Gastrocnemius medialis (tissue), 4 donors: ENCODE measurements at regions of chr1 and their contacts with region 1.

Region 1: GRCh38 chr1:84506002-84506728 is at the starts of genes GNG5 and SPATA1:
- DNase-seq: peak; percentile 97 to 98
- ATAC-seq: peak; percentile 86 to 91
- H3K4me3 ChIP-seq: peak within 1 kb of the TSS; percentile 77 to 92 (median 81)
- H3K27ac ChIP-seq: peak within 1 kb of the TSS; percentile 96 to 97 (median 96)
- H3K4me1 ChIP-seq: peaks cover 34% of the 10 kb centered on the region in 2 donors
- H3K27me3 ChIP-seq: no peaks in the 10 kb centered on the region
- CTCF ChIP-seq: no peak
- POLR2A ChIP-seq: peak; percentile 88 to 93
- total RNA-seq, gene GNG5: 122 to 168 (median 128) TPM
- total RNA-seq, gene SPATA1: 0.35 TPM in 1 of 4 donors, not detected in the others

Region 2: DNA sequence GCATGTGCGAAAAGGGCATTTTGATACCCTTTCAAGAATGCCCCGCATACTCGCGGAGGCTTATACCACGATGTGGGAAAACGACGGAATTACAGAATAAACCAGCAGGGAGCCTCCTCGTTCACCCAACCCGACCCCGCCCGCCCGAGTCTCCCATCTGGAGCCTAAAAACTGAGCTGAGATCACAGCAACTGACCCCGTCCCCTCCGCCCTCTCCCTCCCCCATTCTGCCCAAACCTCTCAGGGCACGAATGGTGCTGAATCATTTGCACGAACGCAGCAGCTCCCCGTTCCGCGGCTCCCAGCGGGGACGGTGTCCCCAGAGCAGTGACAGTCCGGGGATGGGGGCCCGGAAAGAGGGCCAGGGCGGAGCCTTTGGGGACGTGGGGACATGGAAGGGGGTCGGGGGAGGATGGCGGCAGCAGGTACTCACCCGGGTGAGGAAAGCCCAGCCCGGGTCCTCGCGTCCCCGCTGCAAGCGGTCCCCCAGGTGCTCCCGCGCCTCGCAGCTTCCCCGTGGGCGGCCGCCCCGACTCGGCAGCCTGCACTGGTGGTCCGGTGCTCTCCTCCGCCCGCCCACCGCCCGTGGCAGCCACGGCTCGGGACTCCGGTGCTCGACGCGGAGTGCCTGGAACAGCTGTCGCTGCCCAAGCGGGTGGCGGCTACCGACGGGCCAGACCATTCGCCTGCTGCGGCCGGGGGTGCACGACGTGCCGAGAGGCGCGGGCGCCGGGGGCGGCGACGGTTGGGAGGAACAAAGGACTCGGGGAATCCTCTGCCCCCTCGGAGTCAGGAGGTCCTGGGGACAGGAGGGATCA is 507.5 kb before region 1 on chr1 and contains the start of gene TTLL7:
- in situ Hi-C with region 1: no loop called
- intact Hi-C with region 1: loop called (anchors 2 kb)
- DNase-seq: peak; percentile 51 to 79
- ATAC-seq: peak; percentile 92 to 93
- H3K4me3 ChIP-seq: peak within 1 kb of the TSS; percentile 65 to 93 (median 89)
- H3K27ac ChIP-seq: peak within 1 kb of the TSS; percentile 81 to 90 (median 86)
- H3K4me1 ChIP-seq: peaks cover 13 to 17% of the 10 kb centered on the region in 2 donors
- H3K27me3 ChIP-seq: no peaks in the 10 kb centered on the region
- CTCF ChIP-seq: no peak
- POLR2A ChIP-seq: peak; percentile 56 to 74
- total RNA-seq, gene TTLL7: 8.2 to 22.9 (median 12.3) TPM

Region 3: GRCh38 chr1:84298328-84298683 is 207.9 kb before region 1 on chr1:
- in situ Hi-C with region 1: no loop called
- intact Hi-C with region 1: loop called (anchors 5 kb)
- DNase-seq: peak; percentile 35 to 54
- ATAC-seq: peak; percentile 72 to 74
- H3K4me3 ChIP-seq: peak overlapping the region; percentile 79 to 94 (median 81)
- H3K27ac ChIP-seq: peak overlapping the region; percentile 88 to 95 (median 93)
- H3K4me1 ChIP-seq: peaks cover 26 to 37% of the 10 kb centered on the region in 2 donors
- H3K27me3 ChIP-seq: no peaks in the 10 kb centered on the region
- CTCF ChIP-seq: no peak
- POLR2A ChIP-seq: peak; percentile 53 to 77

Region 4: DNA sequence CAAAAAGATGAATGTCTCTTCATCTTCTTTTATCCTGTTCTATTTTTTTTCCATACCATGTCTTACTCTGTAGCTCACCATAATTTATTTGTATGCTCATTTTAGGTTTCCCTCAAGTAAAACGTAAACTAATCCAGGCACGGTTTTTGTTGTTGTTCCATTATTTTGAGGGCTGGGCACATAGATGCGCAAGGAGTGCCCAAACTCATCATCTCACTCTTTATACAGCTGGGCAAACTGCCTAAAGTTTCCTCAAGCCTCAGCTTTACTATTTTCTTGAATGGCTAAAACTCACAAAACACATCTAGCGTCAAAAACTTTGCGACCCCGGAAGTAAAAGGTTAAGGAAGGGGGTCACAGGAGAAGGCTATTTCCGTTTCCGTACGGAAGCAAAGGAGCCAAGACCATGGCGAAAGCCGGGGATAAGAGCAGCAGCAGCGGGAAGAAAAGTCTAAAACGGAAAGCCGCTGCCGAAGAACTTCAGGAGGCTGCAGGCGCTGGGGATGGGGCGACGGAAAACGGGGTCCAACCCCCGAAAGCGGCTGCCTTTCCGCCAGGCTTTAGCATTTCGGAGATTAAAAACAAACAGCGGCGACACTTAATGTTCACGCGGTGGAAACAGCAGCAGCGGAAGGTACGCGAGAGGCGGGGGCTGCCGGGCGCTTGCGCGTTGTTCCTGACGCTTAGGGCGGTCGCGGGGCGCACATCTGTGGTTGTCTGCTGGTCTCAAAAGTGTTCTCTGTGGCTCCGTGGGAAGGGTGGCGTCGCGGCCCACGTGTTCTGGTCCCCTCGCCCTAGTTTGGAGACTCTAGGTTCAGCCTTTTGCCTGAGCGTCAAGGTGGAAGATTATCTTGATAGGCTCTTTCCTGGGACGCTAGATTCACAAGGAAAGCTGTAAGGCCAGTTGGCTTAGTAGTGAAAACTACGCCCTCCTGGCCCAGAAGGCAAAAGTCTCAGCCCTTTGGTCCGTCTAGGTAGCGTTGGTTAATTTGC is 27.0 kb before region 1 on chr1 and contains the start of gene RPF1:
- in situ Hi-C with region 1: no loop called
- intact Hi-C with region 1: loop called (anchors 1 kb)
- DNase-seq: peak; percentile 54 to 60
- ATAC-seq: peak; percentile 97 to 99
- H3K4me3 ChIP-seq: peak within 1 kb of the TSS; percentile 66 to 95 (median 84)
- H3K27ac ChIP-seq: peak within 1 kb of the TSS; percentile 81 to 92 (median 88)
- H3K4me1 ChIP-seq: peaks cover 24 to 26% of the 10 kb centered on the region in 2 donors
- H3K27me3 ChIP-seq: peaks cover 0 to 22% (median 20%) of the 10 kb centered on the region in 3 donors
- CTCF ChIP-seq: no peak
- POLR2A ChIP-seq: peak; percentile 66 to 73
- total RNA-seq, gene RPF1: 35.9 to 61.9 (median 52.4) TPM

Region 5: GRCh38 chr1:84573967-84574842 is 68.0 kb after region 1 on chr1 and contains the start of gene CTBS:
- in situ Hi-C with region 1: loop called in 2 of 4 experiments (anchors 5 kb)
- intact Hi-C with region 1: loop called (anchors 1 kb)
- DNase-seq: peak; percentile 76 to 81
- ATAC-seq: peak; percentile 88 to 92
- H3K4me3 ChIP-seq: peak within 1 kb of the TSS; percentile 70 to 89 (median 88)
- H3K27ac ChIP-seq: peak within 1 kb of the TSS; percentile 91 to 97 (median 96)
- H3K4me1 ChIP-seq: peaks cover 14 to 22% of the 10 kb centered on the region in 2 donors
- H3K27me3 ChIP-seq: no peaks in the 10 kb centered on the region
- CTCF ChIP-seq: no peak
- POLR2A ChIP-seq: peak; percentile 72 to 78
- total RNA-seq, gene CTBS: 4.0 to 6.6 (median 4.7) TPM

Region 6: DNA sequence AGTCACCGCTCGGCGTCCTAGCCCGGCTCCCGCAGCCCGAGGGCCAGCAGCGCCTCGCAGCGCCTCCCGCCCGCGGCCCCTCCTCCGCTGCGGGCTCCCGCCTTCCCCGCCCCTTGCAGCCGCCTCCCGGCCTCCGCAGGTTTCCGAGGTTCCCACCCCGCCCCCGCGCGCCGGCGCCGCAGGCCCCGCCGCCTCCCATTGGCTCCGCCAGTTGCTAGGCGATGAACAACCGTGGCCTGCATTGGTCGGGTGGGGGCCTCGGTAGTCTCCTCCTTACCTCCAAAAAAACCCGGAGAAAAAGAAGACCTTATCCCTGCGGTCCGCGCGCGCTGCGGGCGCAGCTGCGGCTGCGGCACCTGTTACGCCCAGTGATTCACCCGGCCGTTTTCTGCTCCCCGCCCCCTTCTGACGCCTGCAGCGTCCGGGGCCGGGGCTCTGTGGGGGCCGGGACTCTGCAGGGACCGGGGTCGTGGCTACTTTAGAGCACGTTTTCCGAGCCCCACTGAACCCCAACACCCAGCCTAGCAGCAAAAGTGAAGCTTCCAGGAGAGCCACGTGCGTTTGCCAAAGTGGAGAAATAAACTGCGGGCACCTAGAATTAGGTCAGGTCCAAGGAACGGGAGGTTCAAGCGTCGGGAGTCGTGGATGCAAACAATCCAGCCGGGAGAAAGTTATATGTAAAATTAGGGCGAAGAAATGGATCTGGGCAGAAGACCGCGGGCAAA is 184.4 kb after region 1 on chr1 and contains the start of gene SSX2IP:
- in situ Hi-C with region 1: no loop called
- intact Hi-C with region 1: loop called (anchors 1 kb)
- DNase-seq: peak; percentile 97 to 99
- ATAC-seq: peak; percentile 97 to 98
- H3K4me3 ChIP-seq: peak within 1 kb of the TSS; percentile 87 to 96 (median 89)
- H3K27ac ChIP-seq: peak within 1 kb of the TSS; percentile 83 to 91 (median 86)
- H3K4me1 ChIP-seq: peaks cover 4 to 17% of the 10 kb centered on the region in 2 donors
- H3K27me3 ChIP-seq: no peaks in the 10 kb centered on the region
- CTCF ChIP-seq: no peak
- POLR2A ChIP-seq: peak; percentile 10 to 61
- total RNA-seq, gene SSX2IP: 3.5 to 7.0 (median 4.7) TPM